ENCODE measurements at regions of chr3 and their contacts with region 1.

Region 1: DNA sequence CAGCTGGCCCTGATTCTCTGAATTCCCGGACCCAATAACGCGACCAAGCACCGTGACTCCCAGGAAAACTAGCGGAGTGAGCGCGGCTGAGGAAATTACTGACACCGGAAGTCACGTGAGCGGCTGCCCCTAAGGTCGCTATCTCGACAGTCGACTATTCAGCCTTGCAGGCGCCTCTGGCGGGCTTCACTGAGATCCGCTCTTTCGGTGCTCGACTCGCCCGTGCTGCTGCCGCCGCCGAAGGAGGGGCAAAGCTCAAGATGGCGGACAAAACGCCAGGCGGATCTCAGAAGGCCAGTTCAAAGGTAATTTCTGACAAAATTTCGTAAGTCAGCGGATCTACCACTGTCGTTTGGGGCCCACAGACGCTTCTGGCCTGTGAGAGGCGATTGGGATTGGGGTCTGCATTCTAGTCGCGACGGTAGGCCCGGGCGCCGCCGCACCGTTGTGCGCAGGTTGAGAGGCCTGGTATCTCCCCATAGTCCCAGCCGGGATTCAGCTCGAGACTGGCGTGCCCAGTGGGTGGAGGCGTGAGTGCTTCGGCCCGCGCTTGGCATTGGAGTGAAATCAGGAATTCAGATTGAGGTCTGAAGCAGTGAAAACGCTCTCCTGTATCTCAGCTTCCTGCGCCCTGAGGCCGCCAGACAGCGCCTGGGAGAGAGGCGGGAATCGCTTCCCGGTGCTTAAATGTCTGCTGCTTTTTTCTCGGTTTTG is at the start of gene U2SURP:
- DNase-seq: peak; percentile 87 to 95 (median 89)
- H3K4me3 ChIP-seq: peak within 1 kb of the TSS; percentile 99
- H3K4me3 Mint-ChIP-seq: peak within 1 kb of the TSS; percentile 93 to 100 (median 99)
- H3K27ac ChIP-seq: peak within 1 kb of the TSS; percentile 95
- H3K27ac Mint-ChIP-seq: peak within 1 kb of the TSS; percentile 92 to 100 (median 100)
- H3K4me1 ChIP-seq: peaks cover 39% of the 10 kb centered on the region
- H3K4me1 Mint-ChIP-seq: peaks cover 44 to 55% (median 52%) of the 10 kb centered on the region in 3 donors
- H3K27me3 ChIP-seq: no peaks in the 10 kb centered on the region
- H3K27me3 Mint-ChIP-seq: peaks cover 2 to 10% of the 10 kb centered on the region in 2 donors
- total RNA-seq, gene U2SURP: 146 to 148 TPM

Region 2: GRCh38 chr3:142578327-142579223 is 423.0 kb before region 1 on chr3 and contains the start of gene ATR:
- CTCF ChIA-PET with region 1: interaction called, 11 read pairs
- POLR2A ChIA-PET with region 1: interaction called, 24 read pairs
- DNase-seq: peak; percentile 92 to 97 (median 96)
- H3K4me3 ChIP-seq: peak within 1 kb of the TSS; percentile 97
- H3K4me3 Mint-ChIP-seq: peak within 1 kb of the TSS; percentile 92 to 98 (median 98)
- H3K27ac ChIP-seq: peak within 1 kb of the TSS; percentile 92
- H3K27ac Mint-ChIP-seq: peak within 1 kb of the TSS; percentile 96 to 99 (median 99)
- H3K4me1 ChIP-seq: peaks cover 44% of the 10 kb centered on the region
- H3K4me1 Mint-ChIP-seq: peaks cover 53 to 60% (median 57%) of the 10 kb centered on the region in 3 donors
- H3K27me3 ChIP-seq: no peaks in the 10 kb centered on the region
- H3K27me3 Mint-ChIP-seq: no peaks in the 10 kb centered on the region
- total RNA-seq, gene ATR: 38.3 to 38.9 TPM

Region 3: GRCh38 chr3:143040261-143040879 is 38.8 kb after region 1 on chr3:
- CTCF ChIA-PET with region 1: no interaction called
- POLR2A ChIA-PET with region 1: no interaction called
- DNase-seq: no peak
- H3K4me3 ChIP-seq: no peak overlapping the region
- H3K4me3 Mint-ChIP-seq: no peak overlapping the region
- H3K27ac ChIP-seq: no peak overlapping the region
- H3K27ac Mint-ChIP-seq: no peak overlapping the region
- H3K4me1 ChIP-seq: no peaks in the 10 kb centered on the region
- H3K4me1 Mint-ChIP-seq: peaks cover 12 to 17% (median 12%) of the 10 kb centered on the region in 3 donors
- H3K27me3 ChIP-seq: no peaks in the 10 kb centered on the region
- H3K27me3 Mint-ChIP-seq: no peaks in the 10 kb centered on the region

Region 4: DNA sequence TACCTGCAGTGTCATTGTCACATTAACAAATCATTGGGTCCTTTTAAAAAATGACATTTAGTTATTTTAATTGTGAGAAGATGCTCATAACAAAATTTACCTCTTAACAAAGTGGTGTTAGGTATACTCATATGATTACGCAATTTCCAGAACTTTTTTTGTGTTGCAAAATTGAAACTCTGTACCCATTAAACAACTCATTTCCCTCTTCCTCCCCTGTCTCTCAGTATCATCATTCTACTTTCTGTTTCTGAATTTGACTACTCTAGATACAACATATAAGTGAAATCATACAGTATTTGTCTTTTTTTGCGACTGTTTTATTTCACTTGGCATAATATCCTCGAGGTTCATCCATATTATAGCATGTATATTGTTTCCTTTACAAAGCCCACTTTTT is 59.4 kb after region 1 on chr3:
- CTCF ChIA-PET with region 1: no interaction called
- POLR2A ChIA-PET with region 1: no interaction called
- DNase-seq: no peak
- H3K4me3 ChIP-seq: no peak overlapping the region
- H3K4me3 Mint-ChIP-seq: no peak overlapping the region
- H3K27ac ChIP-seq: no peak overlapping the region
- H3K27ac Mint-ChIP-seq: peak overlapping the region in 5 of 8 donors; percentile 2 to 72 (median 64)
- H3K4me1 ChIP-seq: no peaks in the 10 kb centered on the region
- H3K4me1 Mint-ChIP-seq: peaks cover 4 to 22% (median 18%) of the 10 kb centered on the region in 3 donors
- H3K27me3 ChIP-seq: no peaks in the 10 kb centered on the region
- H3K27me3 Mint-ChIP-seq: no peaks in the 10 kb centered on the region

Measured in CD8-positive, alpha-beta memory T cell (primary cell).